Activated naive CD4-positive, alpha-beta T cell treated with anti-CD3 and anti-CD28 coated beads for 36 hours (primary cell): ENCODE measurements at regions of chr11 and their contacts with region 1.

Region 1: GRCh38 chr11:59283825-59284772 is 71.4 kb upstream of the MPEG1 start:
- DNase-seq: peak; percentile 62
- H3K4me3 Mint-ChIP-seq: peak overlapping the region; percentile 26
- H3K27ac Mint-ChIP-seq: no peak overlapping the region
- H3K4me1 Mint-ChIP-seq: peaks cover 15% of the 10 kb centered on the region
- H3K27me3 Mint-ChIP-seq: peaks cover 8% of the 10 kb centered on the region

Region 2: DNA sequence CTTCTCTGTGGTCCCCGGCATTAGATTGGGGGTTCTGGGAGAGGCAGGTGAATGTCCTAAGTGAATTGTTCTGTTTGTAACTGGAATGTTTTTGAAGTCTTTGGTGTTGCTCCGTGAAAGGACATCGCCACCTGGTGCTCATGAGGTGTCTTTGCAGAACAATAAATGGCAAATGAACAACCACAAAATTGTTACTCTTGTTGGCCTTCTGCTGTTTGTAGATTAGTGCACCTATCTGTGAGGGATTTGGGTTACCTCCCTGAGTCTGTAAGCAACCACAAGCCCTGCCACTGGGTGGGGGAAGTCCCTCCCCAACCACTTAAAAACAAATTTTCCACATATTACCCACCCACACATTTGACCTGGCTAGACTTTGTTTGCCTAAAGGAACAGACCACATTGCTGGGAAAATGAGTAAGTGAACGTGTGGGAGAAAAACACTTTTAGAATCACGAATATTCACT is 76.1 kb before region 1 on chr11:
- CTCF ChIA-PET with region 1: interaction called, 6 read pairs
- intact Hi-C with region 1: loop called (anchors 1 kb)
- DNase-seq: peak; percentile 53
- H3K4me3 Mint-ChIP-seq: no peak overlapping the region
- H3K27ac Mint-ChIP-seq: no peak overlapping the region
- H3K4me1 Mint-ChIP-seq: peaks cover 35% of the 10 kb centered on the region
- H3K27me3 Mint-ChIP-seq: peaks cover 26% of the 10 kb centered on the region

Region 3: DNA sequence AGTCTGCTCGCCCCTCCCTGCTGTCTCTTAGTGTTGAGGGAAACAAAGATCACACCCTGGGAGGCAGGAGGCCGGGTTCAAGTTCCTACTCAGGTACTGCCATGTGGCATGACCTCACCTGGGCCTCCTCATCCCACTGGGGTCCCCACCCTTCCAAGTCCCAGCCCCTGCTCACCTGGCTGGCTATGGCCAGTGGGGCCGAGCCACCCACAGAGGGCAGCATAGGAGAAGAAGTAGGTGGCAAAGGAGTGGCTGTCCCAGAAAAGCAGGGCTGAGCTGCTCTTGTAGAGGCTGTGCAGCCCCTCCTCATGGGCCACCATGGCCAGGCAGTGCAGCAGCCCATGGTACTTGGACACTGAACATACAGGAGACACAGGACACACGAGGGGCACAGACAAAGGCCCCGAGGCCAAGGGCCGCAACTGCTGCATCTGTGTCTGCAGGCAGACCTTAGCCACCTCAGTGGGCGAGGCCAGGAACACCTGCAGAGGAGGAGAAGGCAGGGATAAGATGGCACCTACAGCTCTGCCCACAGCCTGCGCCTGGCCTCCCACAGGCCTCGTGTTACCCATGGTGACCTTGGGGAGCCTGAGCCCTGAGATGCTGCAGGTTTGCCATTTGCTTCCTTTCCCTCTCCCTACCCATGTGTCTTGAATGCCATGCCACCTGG is 20.7 kb before region 1 on chr11:
- CTCF ChIA-PET with region 1: interaction called, 3 read pairs
- intact Hi-C with region 1: loop called (anchors 1 kb)
- DNase-seq: peak; percentile 27
- H3K4me3 Mint-ChIP-seq: no peak overlapping the region
- H3K27ac Mint-ChIP-seq: no peak overlapping the region
- H3K4me1 Mint-ChIP-seq: no peaks in the 10 kb centered on the region
- H3K27me3 Mint-ChIP-seq: no peaks in the 10 kb centered on the region

Region 4: DNA sequence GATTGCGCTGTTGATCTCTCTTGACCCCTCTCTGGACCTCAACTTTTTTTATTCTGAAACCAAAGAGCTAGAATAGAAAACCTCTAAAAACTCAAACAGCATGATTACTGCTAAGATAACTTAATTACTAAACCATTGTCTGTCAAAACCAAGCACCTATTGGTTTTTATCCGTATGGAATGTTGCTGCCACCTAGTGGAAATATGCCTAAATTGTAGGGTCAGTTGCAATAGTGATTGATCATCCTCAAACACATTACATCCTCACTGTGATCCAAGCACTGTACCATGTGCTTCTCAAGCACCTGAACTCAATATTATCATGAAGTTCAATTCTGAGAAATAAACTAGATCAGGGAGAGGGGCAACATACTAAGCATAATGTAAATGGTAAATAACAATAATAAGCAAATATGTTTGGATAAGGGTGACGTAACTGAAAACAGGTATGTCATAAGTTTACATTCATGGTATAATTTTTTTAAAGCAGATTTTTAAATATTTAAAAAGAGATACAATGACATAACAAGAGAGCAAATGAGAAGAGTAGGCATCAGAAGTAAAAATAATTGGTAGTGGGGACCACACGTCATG is 145.9 kb after region 1 on chr11:
- CTCF ChIA-PET with region 1: interaction called, 5 read pairs
- intact Hi-C with region 1: loop called (anchors 1 kb)
- DNase-seq: peak; percentile 59
- H3K4me3 Mint-ChIP-seq: no peak overlapping the region
- H3K27ac Mint-ChIP-seq: no peak overlapping the region
- H3K4me1 Mint-ChIP-seq: no peaks in the 10 kb centered on the region
- H3K27me3 Mint-ChIP-seq: peaks cover 2% of the 10 kb centered on the region

Region 5: GRCh38 chr11:59802639-59803176 is 518.6 kb after region 1 on chr11:
- CTCF ChIA-PET with region 1: interaction called, 3 read pairs
- intact Hi-C with region 1: loop called (anchors 5 kb)
- DNase-seq: peak; percentile 53
- H3K4me3 Mint-ChIP-seq: no peak overlapping the region
- H3K27ac Mint-ChIP-seq: no peak overlapping the region
- H3K4me1 Mint-ChIP-seq: no peaks in the 10 kb centered on the region
- H3K27me3 Mint-ChIP-seq: no peaks in the 10 kb centered on the region